ENCODE measurements at regions of chr17 and their contacts with region 1.

Region 1: DNA sequence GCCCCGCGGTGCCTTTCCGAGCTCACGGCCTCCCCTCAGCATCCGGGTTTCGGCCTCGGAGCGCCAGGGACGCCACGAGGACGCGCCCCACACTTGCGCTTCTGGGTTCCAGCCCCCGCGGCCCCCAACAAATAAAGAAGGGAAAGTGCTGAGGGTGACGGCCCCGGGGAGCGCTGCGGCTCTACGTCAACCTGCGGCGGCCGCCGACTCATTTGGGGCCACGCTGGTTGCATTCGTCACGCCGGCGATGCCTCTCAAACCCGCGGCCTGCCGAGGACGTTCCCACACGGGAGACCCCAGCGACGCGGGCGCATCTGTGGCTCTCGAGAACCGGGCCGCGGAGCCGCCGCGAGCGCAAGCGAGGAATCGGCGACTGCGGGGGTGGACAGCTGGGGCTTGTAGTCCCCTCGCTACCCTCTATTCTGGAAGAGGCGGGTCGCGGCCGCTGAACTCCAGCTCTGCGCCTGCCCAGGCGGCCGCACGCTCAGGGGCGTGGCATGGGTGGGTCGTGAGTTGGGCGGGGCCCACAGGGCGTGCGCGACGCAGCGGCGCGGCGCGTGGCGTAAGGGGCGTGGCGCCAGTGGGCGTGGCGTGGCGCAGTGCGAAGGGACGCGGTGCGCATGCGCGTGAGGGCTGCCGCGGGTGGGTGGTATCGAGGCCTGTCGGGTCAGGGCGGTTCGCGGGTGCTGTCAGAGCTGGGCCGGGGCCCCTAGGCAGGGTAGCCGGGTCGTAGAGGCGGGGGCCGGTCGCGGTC is at the start of gene AMZ2:
- H3K4me3 ChIP-seq: peak within 1 kb of the TSS; percentile 98
- H3K27ac ChIP-seq: peak within 1 kb of the TSS; percentile 89
- H3K4me1 ChIP-seq: peaks cover 5% of the 10 kb centered on the region
- CTCF ChIP-seq: peak; percentile 36; the same call in 1 of the 2 replicates

Region 2: DNA sequence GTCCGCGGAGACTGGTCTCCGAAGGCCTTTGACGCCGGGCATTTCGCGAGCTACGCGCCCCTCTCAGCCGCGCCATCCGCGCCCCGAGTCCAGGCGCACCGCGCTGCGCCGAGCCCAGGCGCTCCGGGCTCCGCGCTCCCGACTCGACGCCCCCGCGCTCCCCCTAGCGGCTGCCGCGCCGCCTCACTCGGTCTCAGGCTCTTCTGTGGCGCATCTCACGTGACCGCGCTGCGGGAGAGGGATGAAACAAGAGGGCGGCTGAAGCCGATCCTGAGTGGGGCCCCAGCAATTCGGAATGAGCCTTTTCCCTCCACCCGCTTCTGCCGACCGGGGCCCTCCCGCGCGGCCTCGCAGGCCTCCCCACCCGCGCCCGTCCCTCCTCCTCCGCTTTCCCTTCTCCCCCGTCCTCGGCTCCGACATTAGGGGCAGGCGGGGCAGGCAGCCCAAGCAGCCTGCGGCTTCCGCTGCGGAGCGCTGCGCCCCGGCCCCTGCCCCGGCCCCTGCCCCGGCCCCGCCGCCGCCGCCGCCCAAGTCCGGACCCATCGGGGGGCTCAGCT is 42.3 kb before region 1 on chr17:
- CTCF ChIA-PET with region 1: interaction called, 6 read pairs
- POLR2A ChIA-PET with region 1: interaction called, 19 read pairs
- H3K4me3 ChIP-seq: peak overlapping the region; percentile 90
- H3K27ac ChIP-seq: peak overlapping the region; percentile 79; the same call in 1 of the 2 replicates
- H3K4me1 ChIP-seq: peaks cover 5% of the 10 kb centered on the region; the same call in 1 of the 2 replicates
- CTCF ChIP-seq: peak; percentile 79

Region 3: DNA sequence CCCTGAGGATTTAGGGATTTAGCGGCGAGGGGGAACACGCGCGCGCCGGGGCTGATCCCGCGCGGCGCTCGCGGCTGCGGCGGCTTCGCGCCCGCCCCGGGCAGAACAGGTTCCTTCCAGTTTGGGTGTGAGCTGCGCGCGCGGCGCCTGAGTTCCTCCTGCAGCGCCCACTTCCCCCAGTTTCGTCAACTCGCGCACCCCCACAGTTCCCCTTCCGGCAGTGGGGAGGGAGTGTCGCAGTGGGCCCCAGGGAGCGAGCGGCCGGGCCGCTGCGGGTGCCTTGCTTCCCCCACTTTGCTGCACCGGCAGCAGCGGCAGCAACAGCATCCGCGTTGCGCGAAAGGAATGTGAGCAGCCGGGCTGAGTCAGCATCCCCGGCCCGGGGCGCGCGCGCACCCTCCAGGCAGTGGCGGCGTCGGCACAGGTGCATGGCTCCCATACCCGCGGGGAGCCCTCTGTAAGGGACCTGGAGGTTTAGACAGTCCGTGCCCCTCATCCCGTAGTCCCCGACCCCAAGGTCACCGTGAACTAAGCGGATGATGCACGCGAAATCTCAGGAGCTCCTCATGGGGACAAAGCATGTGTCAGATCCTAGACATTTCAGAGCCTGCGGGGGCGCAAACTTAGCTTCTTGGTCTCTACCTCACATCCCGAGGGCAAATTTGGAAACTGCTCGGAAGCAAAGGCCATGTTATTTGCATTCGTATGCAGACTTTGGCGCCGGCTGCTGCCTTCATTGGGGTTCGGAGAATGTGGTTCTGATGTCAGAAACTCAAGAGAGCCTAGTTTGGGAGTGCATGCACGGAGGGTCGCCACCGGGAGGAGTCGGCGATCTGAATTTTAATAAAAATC is 44.4 kb after region 1 on chr17:
- CTCF ChIA-PET with region 1: interaction called, 3 read pairs
- POLR2A ChIA-PET with region 1: interaction called, 13 read pairs
- H3K4me3 ChIP-seq: peak overlapping the region; percentile 55
- H3K27ac ChIP-seq: peak overlapping the region; percentile 74; the same call in 1 of the 2 replicates
- H3K4me1 ChIP-seq: peaks cover 7% of the 10 kb centered on the region; the same call in 1 of the 2 replicates
- CTCF ChIP-seq: peak; percentile 71

Region 4: DNA sequence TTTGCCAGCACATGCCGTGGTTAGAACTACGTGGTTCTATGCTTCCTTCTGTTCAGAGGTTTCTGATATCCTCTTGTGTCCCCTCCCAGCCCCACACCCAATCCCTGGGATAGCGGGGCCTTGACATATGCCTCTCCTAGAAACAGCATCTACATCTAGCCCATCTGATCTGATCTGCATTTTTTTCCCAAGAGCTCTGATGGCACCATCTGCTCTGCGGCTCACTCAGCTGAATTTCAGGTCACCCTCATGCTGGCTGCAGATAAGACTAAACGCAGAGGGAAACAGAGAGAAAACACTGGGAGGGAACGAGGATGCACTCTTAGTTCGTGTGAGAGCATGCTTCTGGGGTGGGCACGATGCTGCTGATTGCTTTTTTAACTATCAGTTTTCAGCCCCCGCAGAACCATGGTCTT is 199.0 kb after region 1 on chr17:
- CTCF ChIA-PET with region 1: no interaction called
- POLR2A ChIA-PET with region 1: no interaction called
- H3K4me3 ChIP-seq: no peak overlapping the region
- H3K27ac ChIP-seq: no peak overlapping the region
- H3K4me1 ChIP-seq: no peaks in the 10 kb centered on the region
- CTCF ChIP-seq: no peak